Activated CD4-positive, alpha-beta memory T cell treated with anti-CD3 and anti-CD28 coated beads, Interleukin-2, amount 10 ng/mL, durations not matched to agents 7 days and 5 days (primary cell): ENCODE measurements at regions of chr21 and their contacts with region 1.

Region 1: GRCh38 chr21:37496972-37497371 is 130.4 kb downstream of the DYRK1A start:
- DNase-seq: no peak
- H3K4me3 Mint-ChIP-seq: no peak overlapping the region
- H3K27ac Mint-ChIP-seq: no peak overlapping the region
- H3K4me1 Mint-ChIP-seq: peaks cover 3% of the 10 kb centered on the region
- H3K27me3 Mint-ChIP-seq: no peaks in the 10 kb centered on the region

Region 2: GRCh38 chr21:37166733-37167132 is 330.2 kb before region 1 on chr21:
- CTCF ChIA-PET with region 1: interaction called, 10 read pairs
- POLR2A ChIA-PET with region 1: no interaction called
- DNase-seq: no peak
- H3K4me3 Mint-ChIP-seq: no peak overlapping the region
- H3K27ac Mint-ChIP-seq: no peak overlapping the region
- H3K4me1 Mint-ChIP-seq: no peaks in the 10 kb centered on the region
- H3K27me3 Mint-ChIP-seq: no peaks in the 10 kb centered on the region

Region 3: GRCh38 chr21:37435120-37435519 is 61.9 kb before region 1 on chr21:
- CTCF ChIA-PET with region 1: no interaction called
- POLR2A ChIA-PET with region 1: no interaction called
- DNase-seq: peak; percentile 28
- H3K4me3 Mint-ChIP-seq: no peak overlapping the region
- H3K27ac Mint-ChIP-seq: no peak overlapping the region
- H3K4me1 Mint-ChIP-seq: peaks cover 16% of the 10 kb centered on the region
- H3K27me3 Mint-ChIP-seq: no peaks in the 10 kb centered on the region

Region 4: GRCh38 chr21:37658817-37659458 is 162.0 kb after region 1 on chr21:
- CTCF ChIA-PET with region 1: no interaction called
- POLR2A ChIA-PET with region 1: no interaction called
- DNase-seq: no peak
- H3K4me3 Mint-ChIP-seq: no peak overlapping the region
- H3K27ac Mint-ChIP-seq: no peak overlapping the region
- H3K4me1 Mint-ChIP-seq: no peaks in the 10 kb centered on the region
- H3K27me3 Mint-ChIP-seq: peaks cover 7% of the 10 kb centered on the region